ENCODE measurements at regions of chr14 and their contacts with region 1.

Region 1: GRCh38 chr14:45610318-45610717 is 357.3 kb upstream of the MIS18BP1 start:
- DNase-seq: peak; percentile 49
- ATAC-seq: peak; percentile 64
- H3K4me3 ChIP-seq: no peak overlapping the region
- H3K27ac ChIP-seq: no peak overlapping the region
- H3K4me1 ChIP-seq: no peaks in the 10 kb centered on the region
- H3K27me3 ChIP-seq: 0 out of 2 replicates have a peak, but pooled peaks cover 4% of the 10 kb centered on the region
- CTCF ChIP-seq: peak; percentile 64

Region 2: GRCh38 chr14:45819107-45819506 is 208.8 kb after region 1 on chr14:
- CTCF ChIA-PET with region 1: no interaction called
- POLR2A ChIA-PET with region 1: no interaction called
- intact Hi-C with region 1: loop called (anchors 1 kb)
- DNase-seq: peak; percentile 13
- ATAC-seq: peak; percentile 52
- H3K4me3 ChIP-seq: no peak overlapping the region
- H3K27ac ChIP-seq: no peak overlapping the region
- H3K4me1 ChIP-seq: no peaks in the 10 kb centered on the region
- H3K27me3 ChIP-seq: peaks cover 93% of the 10 kb centered on the region
- CTCF ChIP-seq: peak; percentile 42

Region 3: GRCh38 chr14:45838597-45838996 is 228.3 kb after region 1 on chr14:
- CTCF ChIA-PET with region 1: interaction called, 3 read pairs
- POLR2A ChIA-PET with region 1: no interaction called
- intact Hi-C with region 1: loop called (anchors 5 kb)
- DNase-seq: peak; percentile 57
- ATAC-seq: no peak
- H3K4me3 ChIP-seq: no peak overlapping the region
- H3K27ac ChIP-seq: no peak overlapping the region
- H3K4me1 ChIP-seq: no peaks in the 10 kb centered on the region
- H3K27me3 ChIP-seq: peaks cover 55% of the 10 kb centered on the region
- CTCF ChIP-seq: peak; percentile 64

Region 4: DNA sequence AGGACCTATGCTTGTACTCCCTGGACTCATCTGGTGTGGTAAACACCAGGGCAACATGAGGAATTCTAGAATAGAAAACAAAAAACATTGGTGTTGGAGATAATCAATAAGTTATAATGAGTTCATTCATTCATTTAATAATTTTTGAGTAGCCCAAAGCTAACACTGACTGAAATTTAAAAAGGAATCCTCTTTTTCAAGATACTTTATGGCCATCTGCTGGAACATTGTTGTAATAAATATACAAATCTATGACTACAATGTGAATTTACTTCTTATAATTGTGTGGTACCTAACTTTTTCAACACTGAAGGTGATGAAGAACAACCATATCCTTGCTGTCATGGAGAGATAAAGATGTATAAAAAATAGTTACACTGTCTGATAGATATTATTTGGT is 330.0 kb after region 1 on chr14:
- CTCF ChIA-PET with region 1: no interaction called
- POLR2A ChIA-PET with region 1: no interaction called
- intact Hi-C with region 1: loop called (anchors 5 kb)
- DNase-seq: peak; percentile 43
- ATAC-seq: 0 out of 2 replicates have a peak, but pooled peaks have one; percentile 37
- H3K4me3 ChIP-seq: no peak overlapping the region
- H3K27ac ChIP-seq: no peak overlapping the region
- H3K4me1 ChIP-seq: no peaks in the 10 kb centered on the region
- H3K27me3 ChIP-seq: peaks cover 33% of the 10 kb centered on the region
- CTCF ChIP-seq: peak; percentile 64

Region 5: GRCh38 chr14:46344327-46344937 is 734.1 kb after region 1 on chr14:
- CTCF ChIA-PET with region 1: no interaction called
- POLR2A ChIA-PET with region 1: no interaction called
- intact Hi-C with region 1: loop called (anchors 1 kb)
- DNase-seq: peak; percentile 64
- ATAC-seq: peak; percentile 93
- H3K4me3 ChIP-seq: no peak overlapping the region
- H3K27ac ChIP-seq: no peak overlapping the region
- H3K4me1 ChIP-seq: no peaks in the 10 kb centered on the region
- H3K27me3 ChIP-seq: peaks cover 7% of the 10 kb centered on the region; the same call in 1 of the 2 replicates
- CTCF ChIP-seq: peak; percentile 81

Measured in PC-3 (cell line).